ENCODE measurements at regions of chr1 and their contacts with region 1.

Region 1: GRCh38 chr1:181166377-181167196 is 78.1 kb downstream of the IER5 start:
- DNase-seq: peak; percentile 51 to 87 (median 75)
- ATAC-seq: peak; percentile 99
- H3K4me3 ChIP-seq: peak overlapping the region; percentile 6 to 28
- H3K4me3 Mint-ChIP-seq: peak overlapping the region; percentile 73
- H3K27ac ChIP-seq: no peak overlapping the region
- H3K27ac Mint-ChIP-seq: no peak overlapping the region
- H3K4me1 ChIP-seq: peaks cover 5% of the 10 kb centered on the region
- H3K4me1 Mint-ChIP-seq: peaks cover 7% of the 10 kb centered on the region
- H3K27me3 ChIP-seq: no peaks in the 10 kb centered on the region
- H3K27me3 Mint-ChIP-seq: no peaks in the 10 kb centered on the region
- CTCF ChIP-seq: peak; percentile 93

Region 2: GRCh38 chr1:179853102-179853501 is 1313.5 kb before region 1 on chr1:
- CTCF ChIA-PET with region 1: no interaction called
- POLR2A ChIA-PET with region 1: no interaction called
- intact Hi-C with region 1: no loop called
- DNase-seq: no peak
- ATAC-seq: no peak
- H3K4me3 ChIP-seq: no peak overlapping the region
- H3K4me3 Mint-ChIP-seq: no peak overlapping the region
- H3K27ac ChIP-seq: no peak overlapping the region
- H3K27ac Mint-ChIP-seq: no peak overlapping the region
- H3K4me1 ChIP-seq: no peaks in the 10 kb centered on the region
- H3K4me1 Mint-ChIP-seq: peaks cover 3% of the 10 kb centered on the region
- H3K27me3 ChIP-seq: no peaks in the 10 kb centered on the region
- H3K27me3 Mint-ChIP-seq: no peaks in the 10 kb centered on the region
- CTCF ChIP-seq: no peak

Region 3: GRCh38 chr1:180533266-180533987 is 633.2 kb before region 1 on chr1:
- CTCF ChIA-PET with region 1: no interaction called
- POLR2A ChIA-PET with region 1: no interaction called
- intact Hi-C with region 1: loop called in 1 of 2 experiments (anchors 1 kb)
- DNase-seq: peak; percentile 13 to 71 (median 60)
- ATAC-seq: peak; percentile 71
- H3K4me3 ChIP-seq: no peak overlapping the region
- H3K4me3 Mint-ChIP-seq: no peak overlapping the region
- H3K27ac ChIP-seq: no peak overlapping the region
- H3K27ac Mint-ChIP-seq: no peak overlapping the region
- H3K4me1 ChIP-seq: no peaks in the 10 kb centered on the region
- H3K4me1 Mint-ChIP-seq: no peaks in the 10 kb centered on the region
- H3K27me3 ChIP-seq: no peaks in the 10 kb centered on the region
- H3K27me3 Mint-ChIP-seq: peaks cover 7% of the 10 kb centered on the region
- CTCF ChIP-seq: peak; percentile 59

Region 4: GRCh38 chr1:180881806-180882509 is 284.6 kb before region 1 on chr1:
- CTCF ChIA-PET with region 1: interaction called, 3 read pairs
- POLR2A ChIA-PET with region 1: no interaction called
- intact Hi-C with region 1: loop called (anchors 1 kb)
- DNase-seq: peak in 2 of 9 experiments; percentile 5 to 28
- ATAC-seq: no peak
- H3K4me3 ChIP-seq: no peak overlapping the region
- H3K4me3 Mint-ChIP-seq: no peak overlapping the region
- H3K27ac ChIP-seq: no peak overlapping the region
- H3K27ac Mint-ChIP-seq: no peak overlapping the region
- H3K4me1 ChIP-seq: no peaks in the 10 kb centered on the region
- H3K4me1 Mint-ChIP-seq: no peaks in the 10 kb centered on the region
- H3K27me3 ChIP-seq: no peaks in the 10 kb centered on the region
- H3K27me3 Mint-ChIP-seq: no peaks in the 10 kb centered on the region
- CTCF ChIP-seq: no peak

Region 5: GRCh38 chr1:181033799-181034451 is 132.7 kb before region 1 on chr1 and contains the start of gene MR1:
- CTCF ChIA-PET with region 1: interaction called, 47 read pairs
- POLR2A ChIA-PET with region 1: no interaction called
- intact Hi-C with region 1: loop called (anchors 1 kb)
- DNase-seq: peak in 7 of 9 experiments; percentile 16 to 93 (median 48)
- ATAC-seq: peak; percentile 97
- H3K4me3 ChIP-seq: peak within 1 kb of the TSS; percentile 66 to 76
- H3K4me3 Mint-ChIP-seq: peak within 1 kb of the TSS; percentile 96
- H3K27ac ChIP-seq: peak within 1 kb of the TSS; percentile 85 to 99
- H3K27ac Mint-ChIP-seq: peak within 1 kb of the TSS; percentile 99
- H3K4me1 ChIP-seq: peaks cover 39% of the 10 kb centered on the region
- H3K4me1 Mint-ChIP-seq: peaks cover 55% of the 10 kb centered on the region
- H3K27me3 ChIP-seq: no peaks in the 10 kb centered on the region
- H3K27me3 Mint-ChIP-seq: no peaks in the 10 kb centered on the region
- CTCF ChIP-seq: no peak
- total RNA-seq, gene MR1: 15.4 to 16.0 TPM

Region 6: GRCh38 chr1:181152892-181153633 is 13.5 kb before region 1 on chr1:
- CTCF ChIA-PET with region 1: interaction called, 333 read pairs
- POLR2A ChIA-PET with region 1: interaction called, 5 read pairs
- intact Hi-C with region 1: loop called in 1 of 2 experiments (anchors 1 kb)
- DNase-seq: peak in 1 of 9 experiments; percentile 22
- ATAC-seq: no peak
- H3K4me3 ChIP-seq: no peak overlapping the region
- H3K4me3 Mint-ChIP-seq: no peak overlapping the region
- H3K27ac ChIP-seq: no peak overlapping the region
- H3K27ac Mint-ChIP-seq: no peak overlapping the region
- H3K4me1 ChIP-seq: peaks cover 49% of the 10 kb centered on the region
- H3K4me1 Mint-ChIP-seq: peaks cover 48% of the 10 kb centered on the region
- H3K27me3 ChIP-seq: no peaks in the 10 kb centered on the region
- H3K27me3 Mint-ChIP-seq: no peaks in the 10 kb centered on the region
- CTCF ChIP-seq: no peak